Prostate gland (tissue), 2 donors: ENCODE measurements at regions of chr12 and their contacts with region 1.

Region 1: DNA sequence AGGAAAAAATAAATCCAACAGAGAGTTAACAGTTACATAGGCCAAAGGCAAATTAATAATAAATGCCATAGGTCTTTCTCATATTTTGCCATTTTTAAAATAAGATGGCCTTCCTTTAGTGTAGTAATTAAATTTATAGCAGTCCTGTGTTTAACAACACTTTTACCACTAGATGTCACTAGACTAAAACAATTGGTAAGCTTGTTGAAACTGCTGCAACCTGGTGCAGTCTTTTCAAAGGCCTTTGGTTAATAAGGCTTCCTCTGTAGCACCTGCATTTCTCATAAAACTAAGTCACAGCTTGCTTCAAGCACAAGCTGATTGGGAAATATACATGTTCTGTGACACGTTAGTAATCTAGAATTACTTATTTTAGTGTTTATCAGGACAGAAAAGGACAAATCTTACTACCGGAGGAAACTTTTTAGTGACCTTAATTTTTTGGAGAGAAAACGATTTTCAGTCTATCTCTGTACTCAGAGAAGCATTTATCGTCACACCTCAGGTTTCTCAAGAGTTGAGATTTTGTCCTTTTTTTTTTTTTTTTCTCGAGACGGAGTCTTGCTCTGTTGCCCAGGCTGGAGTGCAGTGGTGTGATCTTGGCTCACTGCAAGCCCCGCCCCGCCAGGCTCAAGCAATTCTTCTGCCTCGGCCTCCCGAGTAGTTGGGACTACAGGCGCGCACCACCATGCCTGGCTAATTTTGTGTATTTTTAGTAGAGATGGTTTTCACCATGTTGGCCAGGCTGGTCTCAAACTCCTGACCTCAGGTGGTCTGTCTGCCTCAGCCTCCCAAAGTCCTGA is 20.0 kb downstream of the BORCS5 start:
- DNase-seq: peak; percentile 43
- H3K4me3 ChIP-seq: no peak overlapping the region
- H3K27ac ChIP-seq: no peak overlapping the region
- H3K4me1 ChIP-seq: no peaks in the 10 kb centered on the region
- H3K27me3 ChIP-seq: no peaks in the 10 kb centered on the region
- CTCF ChIP-seq: peak; percentile 53 to 93 (median 90)
- POLR2A ChIP-seq: no peak

Region 2: DNA sequence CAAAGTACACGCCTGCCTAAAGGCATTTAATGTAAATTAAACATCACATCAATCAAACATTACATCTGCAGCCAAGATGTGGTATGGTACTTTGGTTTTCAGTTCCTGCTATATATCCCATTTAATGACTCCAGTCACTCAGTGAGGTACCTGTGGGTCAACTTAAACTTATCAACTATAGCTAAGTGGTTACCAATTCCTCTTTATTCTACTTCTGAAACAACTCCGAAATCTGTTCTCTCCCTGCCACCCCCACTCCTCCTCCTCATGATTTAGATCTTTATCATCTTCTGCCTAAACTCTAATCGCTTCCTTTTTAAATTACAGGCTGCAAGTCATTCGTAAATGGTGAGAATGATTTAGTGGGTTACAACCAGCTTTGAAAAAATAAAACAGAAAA is 248.2 kb before region 1 on chr12:
- intact Hi-C with region 1: no loop called
- DNase-seq: no peak
- H3K4me3 ChIP-seq: no peak overlapping the region
- H3K27ac ChIP-seq: no peak overlapping the region
- H3K4me1 ChIP-seq: no peaks in the 10 kb centered on the region
- H3K27me3 ChIP-seq: no peaks in the 10 kb centered on the region
- CTCF ChIP-seq: no peak
- POLR2A ChIP-seq: no peak

Region 3: DNA sequence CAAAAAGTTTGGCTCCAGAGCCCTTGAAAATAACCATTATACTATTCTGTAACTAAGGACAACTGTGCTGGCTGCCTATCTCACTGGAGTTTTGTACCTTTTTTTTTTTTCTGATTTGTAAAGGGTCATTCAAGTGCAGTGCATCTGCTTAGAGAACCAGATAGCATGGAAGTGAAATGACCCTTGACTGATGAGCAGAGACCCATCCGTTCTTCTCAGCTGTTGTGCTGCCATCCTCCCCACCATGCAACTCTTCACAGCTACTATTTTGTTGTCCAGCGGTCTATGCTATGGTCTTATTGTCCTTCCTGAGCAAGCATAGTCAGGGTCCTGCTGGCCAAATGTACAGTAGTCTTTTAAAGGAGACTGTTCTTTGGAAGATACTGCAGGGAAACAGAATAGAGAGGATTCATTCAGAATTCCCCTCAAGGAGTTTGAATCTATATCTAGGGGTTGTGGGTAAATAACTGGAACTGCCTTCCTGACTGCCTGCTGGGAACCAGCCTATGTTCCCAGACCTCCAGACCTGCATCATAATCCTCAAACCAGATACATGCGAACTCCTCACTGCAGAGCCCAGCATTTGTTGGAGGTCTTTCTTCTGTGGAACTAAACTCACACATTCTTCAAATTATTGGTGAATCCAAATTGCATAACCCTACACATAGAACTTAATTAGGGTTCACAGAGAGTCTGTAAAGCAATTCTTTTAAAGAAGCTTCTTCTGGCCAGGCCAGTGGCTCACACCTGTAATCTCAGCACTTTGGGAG is 278.0 kb after region 1 on chr12:
- intact Hi-C with region 1: loop called (anchors 5 kb)
- DNase-seq: no peak
- H3K4me3 ChIP-seq: no peak overlapping the region
- H3K27ac ChIP-seq: no peak overlapping the region
- H3K4me1 ChIP-seq: no peaks in the 10 kb centered on the region
- H3K27me3 ChIP-seq: no peaks in the 10 kb centered on the region
- CTCF ChIP-seq: no peak
- POLR2A ChIP-seq: no peak

Region 4: GRCh38 chr12:12705838-12706520 is 329.1 kb after region 1 on chr12:
- intact Hi-C with region 1: loop called (anchors 2 kb)
- DNase-seq: no peak
- H3K4me3 ChIP-seq: no peak overlapping the region
- H3K27ac ChIP-seq: no peak overlapping the region
- H3K4me1 ChIP-seq: no peaks in the 10 kb centered on the region
- H3K27me3 ChIP-seq: no peaks in the 10 kb centered on the region
- CTCF ChIP-seq: no peak
- POLR2A ChIP-seq: no peak